ENCODE measurements at regions of chr3 and their contacts with region 1.

Region 1: GRCh38 chr3:141311496-141312353 is 56.6 kb upstream of the ZBTB38 start:
- DNase-seq: peak; percentile 92 to 97 (median 95)
- H3K4me3 ChIP-seq: peak overlapping the region; percentile 51 to 92 (median 73)
- H3K4me3 Mint-ChIP-seq: peak overlapping the region; percentile 96 to 99
- H3K27ac ChIP-seq: peak overlapping the region; percentile 57 to 84
- H3K27ac Mint-ChIP-seq: peak overlapping the region; percentile 88 to 97 (median 94)
- H3K4me1 ChIP-seq: peaks cover 10 to 16% of the 10 kb centered on the region in 2 donors
- H3K4me1 Mint-ChIP-seq: peaks cover 19% of the 10 kb centered on the region
- H3K27me3 ChIP-seq: no peaks in the 10 kb centered on the region
- H3K27me3 Mint-ChIP-seq: peaks cover 0 to 2% (median 1%) of the 10 kb centered on the region in 3 donors
- CTCF ChIP-seq: peak; percentile 64

Region 2: DNA sequence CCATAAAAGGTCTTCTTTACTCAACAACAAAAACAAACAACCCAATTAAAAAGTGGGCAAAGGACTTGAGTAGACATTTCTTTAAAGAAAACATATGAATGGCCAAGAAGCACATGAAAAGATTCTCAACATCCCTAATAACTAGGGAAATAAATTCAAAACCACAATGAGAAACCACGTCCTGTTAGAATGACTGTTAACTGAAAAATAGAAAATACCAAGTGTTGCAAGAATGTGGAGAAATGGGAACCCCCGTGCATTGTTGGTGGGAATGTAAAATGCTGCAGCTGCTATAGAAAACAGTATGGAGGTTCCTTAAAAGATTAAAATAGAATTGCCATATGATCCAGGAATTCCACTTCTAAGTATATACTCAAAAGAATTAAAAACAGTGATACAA is 1668.7 kb before region 1 on chr3:
- intact Hi-C with region 1: no loop called
- DNase-seq: peak; percentile 15 to 81 (median 72)
- H3K4me3 ChIP-seq: no peak overlapping the region
- H3K4me3 Mint-ChIP-seq: peak overlapping the region in 1 of 2 donors; percentile 68
- H3K27ac ChIP-seq: no peak overlapping the region
- H3K27ac Mint-ChIP-seq: peak overlapping the region in 2 of 7 donors; percentile 14 to 21
- H3K4me1 ChIP-seq: peaks cover 13 to 22% of the 10 kb centered on the region in 2 donors
- H3K4me1 Mint-ChIP-seq: peaks cover 42% of the 10 kb centered on the region
- H3K27me3 ChIP-seq: no peaks in the 10 kb centered on the region
- H3K27me3 Mint-ChIP-seq: peaks cover 0 to 2% (median 0%) of the 10 kb centered on the region in 3 donors
- CTCF ChIP-seq: no peak

Region 3: GRCh38 chr3:141231101-141231935 is 80.4 kb before region 1 on chr3 and contains the start of gene PXYLP1:
- intact Hi-C with region 1: no loop called
- DNase-seq: peak; percentile 82 to 84 (median 83)
- H3K4me3 ChIP-seq: peak within 1 kb of the TSS; percentile 67 to 85 (median 80)
- H3K4me3 Mint-ChIP-seq: peak within 1 kb of the TSS; percentile 87 to 96
- H3K27ac ChIP-seq: peak within 1 kb of the TSS; percentile 22 to 79
- H3K27ac Mint-ChIP-seq: peak within 1 kb of the TSS; percentile 18 to 90 (median 79)
- H3K4me1 ChIP-seq: peaks cover 47 to 54% of the 10 kb centered on the region in 2 donors
- H3K4me1 Mint-ChIP-seq: peaks cover 55% of the 10 kb centered on the region
- H3K27me3 ChIP-seq: no peaks in the 10 kb centered on the region
- H3K27me3 Mint-ChIP-seq: peaks cover 0 to 8% (median 6%) of the 10 kb centered on the region in 3 donors
- CTCF ChIP-seq: peak; percentile 71
- polyA plus RNA-seq, gene PXYLP1: 4.1 to 10.9 (median 5.8) TPM

Region 4: GRCh38 chr3:141360888-141361598 is 49.3 kb after region 1 on chr3:
- intact Hi-C with region 1: loop called in 1 of 2 experiments (anchors 5 kb)
- DNase-seq: peak in 2 of 3 donors; percentile 15 to 25
- H3K4me3 ChIP-seq: no peak overlapping the region
- H3K4me3 Mint-ChIP-seq: no peak overlapping the region
- H3K27ac ChIP-seq: no peak overlapping the region
- H3K27ac Mint-ChIP-seq: no peak overlapping the region
- H3K4me1 ChIP-seq: no peaks in the 10 kb centered on the region
- H3K4me1 Mint-ChIP-seq: peaks cover 8% of the 10 kb centered on the region
- H3K27me3 ChIP-seq: no peaks in the 10 kb centered on the region
- H3K27me3 Mint-ChIP-seq: peaks cover 0 to 5% (median 4%) of the 10 kb centered on the region in 3 donors
- CTCF ChIP-seq: peak; percentile 59

Region 5: DNA sequence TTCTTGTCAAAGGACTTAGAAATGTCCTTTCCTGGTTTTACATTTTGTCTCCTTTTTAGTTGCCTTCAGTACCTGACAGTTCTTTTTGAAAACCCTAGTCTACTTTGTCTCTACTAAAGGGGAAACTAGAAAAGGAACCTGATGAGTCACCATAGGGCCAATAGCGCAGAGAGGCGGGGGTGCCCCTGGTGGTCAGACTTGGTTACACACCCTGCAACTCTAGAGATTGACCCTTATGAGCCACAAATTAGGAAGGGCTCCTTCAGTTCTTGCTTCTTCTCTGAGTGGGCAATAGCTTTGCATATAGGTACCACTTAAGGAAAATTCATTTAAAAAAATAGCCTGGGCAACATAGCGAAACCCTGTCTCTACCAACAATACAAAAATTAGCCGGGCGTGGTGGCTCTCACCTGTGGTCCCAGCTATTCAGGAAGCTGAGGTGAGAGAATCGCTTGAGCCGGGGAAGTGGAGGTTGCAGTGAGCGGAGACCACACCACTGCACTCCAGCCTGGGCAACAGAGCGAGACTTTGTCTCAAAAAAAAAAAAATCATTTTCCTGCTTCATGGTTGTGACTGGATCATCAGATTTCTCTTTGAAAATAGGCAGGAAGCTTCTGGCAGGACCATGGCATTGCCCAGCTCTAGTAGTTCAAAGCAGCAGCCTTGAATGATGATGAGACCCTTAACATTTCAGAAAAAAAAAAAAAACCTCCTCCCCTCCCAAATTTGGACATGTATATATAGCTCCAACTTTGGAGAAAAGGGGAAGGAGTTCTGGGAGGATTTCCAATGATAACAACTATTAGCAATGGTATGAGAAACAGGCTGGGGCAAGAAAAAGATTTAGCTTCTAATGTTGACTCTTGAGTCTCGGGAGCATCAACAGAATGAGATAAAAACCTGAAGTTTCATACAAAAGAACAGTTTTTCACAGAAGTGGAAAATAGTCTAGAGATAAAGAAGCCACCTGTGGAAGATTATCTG is 129.9 kb after region 1 on chr3:
- intact Hi-C with region 1: loop called in 1 of 2 experiments (anchors 5 kb)
- DNase-seq: peak; percentile 72 to 89 (median 81)
- H3K4me3 ChIP-seq: no peak overlapping the region
- H3K4me3 Mint-ChIP-seq: peak overlapping the region in 1 of 2 donors; percentile 28
- H3K27ac ChIP-seq: no peak overlapping the region
- H3K27ac Mint-ChIP-seq: peak overlapping the region in 2 of 7 donors; percentile 38 to 71
- H3K4me1 ChIP-seq: peaks cover 0 to 4% of the 10 kb centered on the region in 2 donors
- H3K4me1 Mint-ChIP-seq: peaks cover 13% of the 10 kb centered on the region
- H3K27me3 ChIP-seq: no peaks in the 10 kb centered on the region
- H3K27me3 Mint-ChIP-seq: no peaks in the 10 kb centered on the region
- CTCF ChIP-seq: peak; percentile 98

Region 6: GRCh38 chr3:141452036-141452435 is 140.3 kb after region 1 on chr3:
- intact Hi-C with region 1: loop called in 1 of 2 experiments (anchors 5 kb)
- DNase-seq: peak; percentile 36 to 59 (median 51)
- H3K4me3 ChIP-seq: no peak overlapping the region
- H3K4me3 Mint-ChIP-seq: no peak overlapping the region
- H3K27ac ChIP-seq: no peak overlapping the region
- H3K27ac Mint-ChIP-seq: no peak overlapping the region
- H3K4me1 ChIP-seq: peaks cover 0 to 6% of the 10 kb centered on the region in 2 donors
- H3K4me1 Mint-ChIP-seq: peaks cover 6% of the 10 kb centered on the region
- H3K27me3 ChIP-seq: no peaks in the 10 kb centered on the region
- H3K27me3 Mint-ChIP-seq: no peaks in the 10 kb centered on the region
- CTCF ChIP-seq: peak; percentile 44

Region 7: GRCh38 chr3:141561426-141562034 is 249.8 kb after region 1 on chr3:
- intact Hi-C with region 1: loop called in 1 of 2 experiments (anchors 10 kb)
- DNase-seq: peak; percentile 47 to 62 (median 57)
- H3K4me3 ChIP-seq: no peak overlapping the region
- H3K4me3 Mint-ChIP-seq: no peak overlapping the region
- H3K27ac ChIP-seq: no peak overlapping the region
- H3K27ac Mint-ChIP-seq: peak overlapping the region in 1 of 7 donors; percentile 36
- H3K4me1 ChIP-seq: peaks cover 5 to 12% of the 10 kb centered on the region in 2 donors
- H3K4me1 Mint-ChIP-seq: peaks cover 6% of the 10 kb centered on the region
- H3K27me3 ChIP-seq: no peaks in the 10 kb centered on the region
- H3K27me3 Mint-ChIP-seq: peaks cover 0 to 1% (median 0%) of the 10 kb centered on the region in 3 donors
- CTCF ChIP-seq: peak; percentile 98

Region 8: GRCh38 chr3:141605883-141606282 is 294.2 kb after region 1 on chr3:
- intact Hi-C with region 1: no loop called
- DNase-seq: no peak
- H3K4me3 ChIP-seq: no peak overlapping the region
- H3K4me3 Mint-ChIP-seq: no peak overlapping the region
- H3K27ac ChIP-seq: no peak overlapping the region
- H3K27ac Mint-ChIP-seq: no peak overlapping the region
- H3K4me1 ChIP-seq: peaks cover 0 to 7% of the 10 kb centered on the region in 2 donors
- H3K4me1 Mint-ChIP-seq: peaks cover 13% of the 10 kb centered on the region
- H3K27me3 ChIP-seq: no peaks in the 10 kb centered on the region
- H3K27me3 Mint-ChIP-seq: peaks cover 0 to 2% (median 0%) of the 10 kb centered on the region in 3 donors
- CTCF ChIP-seq: no peak

Measured in CD14-positive monocyte (primary cell).